BJ (cell line): ENCODE measurements at regions of chr19 and their contacts with region 1.

Region 1: GRCh38 chr19:31110331-31110730 is 238.9 kb downstream of the TSHZ3 start:
- DNase-seq: no peak
- H3K4me3 ChIP-seq: no peak overlapping the region
- H3K27me3 ChIP-seq: no peaks in the 10 kb centered on the region; the same call in 1 of the 2 replicates
- CTCF ChIP-seq: peak; percentile 58

Region 2: DNA sequence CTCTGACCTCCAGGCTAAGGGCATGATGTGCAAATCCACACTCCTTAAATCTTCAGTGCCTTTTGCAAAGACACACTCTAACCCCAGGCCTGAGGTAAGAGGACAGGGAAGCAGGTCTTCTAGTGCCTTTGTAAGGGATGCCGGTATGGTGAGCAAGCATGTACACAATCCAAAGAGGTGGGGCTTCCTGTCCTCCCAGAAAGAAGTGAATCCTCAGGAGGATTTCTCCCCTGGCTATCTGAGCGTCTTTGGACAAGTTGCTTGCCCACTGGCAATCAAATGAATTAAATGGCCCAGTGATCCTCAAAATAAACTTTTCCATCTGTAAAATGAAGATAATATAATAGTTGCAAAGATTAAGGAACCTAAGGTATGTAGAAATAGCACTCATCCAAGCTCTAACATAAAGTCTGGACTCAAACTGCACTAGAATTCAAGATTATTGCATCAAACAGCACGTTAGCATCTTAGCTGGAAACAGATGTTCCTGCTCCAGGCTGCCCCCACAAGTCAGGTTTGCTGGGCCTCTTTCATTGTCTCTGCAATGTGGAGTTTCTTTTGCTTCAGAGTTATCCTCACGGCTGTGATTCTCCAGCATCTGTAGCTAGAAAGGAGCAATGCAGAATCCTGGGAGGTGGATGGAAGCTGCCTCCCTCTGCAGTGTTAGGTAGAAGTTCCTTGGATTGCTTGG is 10.7 kb before region 1 on chr19:
- CTCF ChIA-PET with region 1: interaction called, 20 read pairs
- POLR2A ChIA-PET with region 1: no interaction called
- DNase-seq: no peak
- H3K4me3 ChIP-seq: no peak overlapping the region
- H3K27me3 ChIP-seq: no peaks in the 10 kb centered on the region
- CTCF ChIP-seq: 0 out of 2 replicates have a peak, but pooled peaks have one; percentile 11

Region 3: DNA sequence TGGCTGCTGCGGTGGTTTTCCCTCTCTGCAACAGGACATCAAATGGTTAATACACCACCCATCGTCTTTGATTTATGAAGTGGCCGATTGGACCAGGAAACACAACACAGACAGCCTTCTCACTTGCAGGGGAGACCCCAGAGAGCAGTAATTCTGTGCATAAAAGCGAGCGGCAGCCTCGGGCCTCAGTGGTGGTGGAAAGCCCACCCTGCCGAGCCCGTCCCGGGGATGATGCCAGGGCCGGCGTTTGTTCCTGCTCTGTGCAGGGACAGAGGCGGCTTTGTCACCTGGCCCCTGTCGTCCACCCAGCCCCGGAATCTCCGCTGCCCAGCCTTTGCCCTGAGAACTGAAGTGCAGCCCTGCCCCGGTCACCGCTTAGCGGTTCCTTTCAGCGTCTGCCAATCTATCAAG is 54.5 kb after region 1 on chr19:
- CTCF ChIA-PET with region 1: no interaction called
- POLR2A ChIA-PET with region 1: no interaction called
- DNase-seq: no peak
- H3K4me3 ChIP-seq: no peak overlapping the region
- H3K27me3 ChIP-seq: no peaks in the 10 kb centered on the region
- CTCF ChIP-seq: no peak